Right ventricle myocardium inferior (tissue), 1 donor: ENCODE measurements at regions of chr20 and their contacts with region 1.

Region 1: GRCh38 chr20:35664544-35665221 is at the starts of genes CPNE1 and RBM12:
- DNase-seq: peak; percentile 95
- ATAC-seq: peak; percentile 98
- total RNA-seq, gene CPNE1: 49.6 TPM
- total RNA-seq, gene RBM12: 41.4 TPM

Region 2: GRCh38 chr20:35619196-35620095 is 45.2 kb before region 1 on chr20:
- intact Hi-C with region 1: loop called (anchors 2 kb)
- DNase-seq: peak; percentile 85
- ATAC-seq: peak; percentile 41

Region 3: DNA sequence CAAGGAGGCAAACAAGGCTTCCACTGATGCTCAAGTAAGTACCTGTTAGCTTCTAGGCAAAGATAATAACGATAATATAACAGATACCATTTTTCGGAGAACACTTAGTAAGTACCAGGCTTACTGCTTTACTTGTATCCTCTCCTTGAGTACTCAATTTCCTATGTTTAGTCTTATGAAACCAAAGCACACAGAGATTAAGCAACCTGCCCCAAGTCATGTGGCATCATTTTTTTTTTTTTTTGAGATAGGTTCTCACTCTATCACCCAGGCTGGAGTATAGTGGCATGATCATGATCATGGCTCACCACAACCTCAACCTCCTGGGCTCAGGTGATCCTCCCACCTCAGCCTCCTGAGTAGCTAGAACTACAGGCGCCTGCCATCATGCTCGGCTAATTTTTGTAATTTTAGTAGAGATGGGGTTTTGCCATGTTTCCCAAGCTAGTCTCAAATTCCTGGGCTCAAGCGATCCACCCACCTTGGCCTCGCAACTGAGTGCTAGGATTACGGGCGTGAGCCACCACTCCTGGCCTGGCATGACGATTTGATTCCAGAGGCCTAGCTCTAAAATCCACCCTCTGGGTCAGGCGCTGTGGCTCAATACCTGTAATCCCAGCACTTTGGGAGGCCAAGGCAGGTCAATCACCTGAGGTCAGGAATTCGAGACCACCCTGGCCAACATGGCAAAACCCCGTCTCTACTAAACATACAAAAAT is 35.1 kb before region 1 on chr20:
- intact Hi-C with region 1: no loop called
- DNase-seq: no peak
- ATAC-seq: no peak

Region 4: GRCh38 chr20:35699127-35699975 is 34.7 kb after region 1 on chr20 and contains the starts of genes NFS1 and ROMO1:
- intact Hi-C with region 1: loop called (anchors 2 kb)
- DNase-seq: peak; percentile 95
- ATAC-seq: peak; percentile 95
- total RNA-seq, gene NFS1: 54.3 TPM
- total RNA-seq, gene ROMO1: 190 TPM